Activated CD4-positive, alpha-beta memory T cell treated with anti-CD3 and anti-CD28 coated beads for 36 hours (primary cell): ENCODE measurements at regions of chr17 and their contacts with region 1.

Region 1: DNA sequence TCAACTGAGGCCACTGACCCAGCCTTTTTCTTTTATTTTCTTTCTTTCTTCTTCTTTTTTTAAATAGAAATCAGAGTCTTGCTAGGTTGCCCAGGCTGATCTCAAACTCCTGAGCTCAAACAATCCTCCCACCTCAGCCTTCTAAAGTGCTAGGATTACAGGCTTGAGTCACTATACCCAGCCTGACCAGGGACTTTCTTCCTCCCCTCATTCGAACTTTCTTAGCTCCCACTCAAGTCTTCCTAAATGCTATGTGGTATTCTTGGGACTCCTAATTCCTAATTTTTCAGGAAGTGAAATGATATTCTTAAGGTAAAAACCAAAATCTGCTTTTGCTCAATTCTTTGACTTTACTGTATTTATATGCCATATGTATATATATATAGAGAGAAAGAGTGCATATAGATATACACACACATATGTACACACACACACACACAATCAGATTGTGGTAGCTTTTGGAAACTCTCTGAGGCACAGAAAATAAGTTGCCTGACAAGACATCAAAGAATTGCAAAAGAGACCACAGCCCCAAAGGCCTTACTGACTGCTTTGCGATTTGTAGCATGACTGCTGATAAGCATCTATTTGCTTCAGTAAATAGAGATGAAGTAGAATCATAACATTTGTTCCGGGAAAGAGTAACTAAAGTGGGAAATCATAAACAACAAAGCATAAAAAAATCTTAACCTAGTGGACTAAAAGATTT is 9.5 kb upstream of the AMZ2 start:
- DNase-seq: peak; percentile 38
- H3K4me3 Mint-ChIP-seq: peak overlapping the region; percentile 73
- H3K27ac Mint-ChIP-seq: peak overlapping the region; percentile 96
- H3K4me1 Mint-ChIP-seq: peaks cover 53% of the 10 kb centered on the region
- H3K27me3 Mint-ChIP-seq: no peaks in the 10 kb centered on the region

Region 2: DNA sequence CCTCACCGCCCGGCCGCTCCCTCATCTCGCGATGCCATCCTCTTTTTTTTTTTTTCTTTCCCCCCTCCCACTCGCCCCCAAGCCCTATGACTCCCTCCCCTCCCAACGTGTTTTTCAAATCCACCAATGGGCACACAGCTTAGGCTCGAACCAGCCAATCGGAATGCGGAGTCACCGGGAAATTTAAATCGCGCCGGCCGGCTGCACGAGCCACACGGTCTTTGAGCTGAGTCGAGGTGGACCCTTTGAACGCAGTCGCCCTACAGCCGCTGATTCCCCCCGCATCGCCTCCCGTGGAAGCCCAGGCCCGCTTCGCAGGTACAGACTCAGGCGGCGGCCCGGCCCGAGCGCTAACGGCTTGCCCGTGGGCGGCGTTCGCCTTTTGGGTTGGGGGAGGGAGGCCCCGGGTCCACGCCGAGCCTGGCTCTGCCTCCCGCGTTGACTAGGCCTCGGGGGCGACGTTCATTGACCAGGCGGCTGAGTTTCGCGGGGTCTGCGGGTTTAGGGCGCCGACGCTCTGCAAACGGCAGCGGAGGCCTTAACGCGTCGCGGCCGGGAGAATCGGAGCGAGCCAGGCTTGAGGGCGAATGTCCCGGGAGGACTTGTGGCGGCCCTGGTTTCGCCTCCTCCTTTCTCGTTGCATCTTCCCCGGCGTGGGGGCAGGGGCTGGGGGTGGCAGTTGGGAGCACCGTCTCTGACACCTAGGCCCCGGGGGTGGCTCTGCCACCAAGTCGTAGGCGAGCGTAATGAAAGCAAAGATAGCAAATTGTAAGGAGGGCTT is 202.6 kb before region 1 on chr17 and contains the start of gene KPNA2:
- CTCF ChIA-PET with region 1: no interaction called
- POLR2A ChIA-PET with region 1: no interaction called
- intact Hi-C with region 1: loop called (anchors 5 kb)
- DNase-seq: peak; percentile 95
- H3K4me3 Mint-ChIP-seq: peak within 1 kb of the TSS; percentile 95
- H3K27ac Mint-ChIP-seq: peak within 1 kb of the TSS; percentile 95
- H3K4me1 Mint-ChIP-seq: peaks cover 21% of the 10 kb centered on the region
- H3K27me3 Mint-ChIP-seq: no peaks in the 10 kb centered on the region
- total RNA-seq, gene KPNA2: 225 to 229 TPM

Region 3: DNA sequence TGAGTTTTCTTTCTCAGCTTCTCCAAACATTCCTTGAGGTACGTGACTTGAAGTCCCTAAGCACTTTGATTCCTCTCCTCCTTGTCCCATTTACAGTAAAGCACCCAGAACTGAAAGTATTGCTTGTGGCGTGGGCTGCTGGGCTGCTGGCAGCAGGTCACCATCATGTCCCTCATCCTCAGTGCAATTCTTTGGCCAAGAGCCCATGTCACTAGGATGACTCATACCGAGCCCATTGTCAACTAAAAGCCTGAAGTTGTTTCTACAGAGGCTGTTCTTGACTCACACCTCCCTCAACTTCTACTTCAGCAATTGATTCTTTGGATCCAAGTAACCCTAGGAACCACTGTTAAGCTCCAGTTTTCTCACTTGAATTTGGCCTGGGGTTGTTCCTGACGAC is 148.4 kb before region 1 on chr17:
- CTCF ChIA-PET with region 1: no interaction called
- POLR2A ChIA-PET with region 1: no interaction called
- intact Hi-C with region 1: no loop called
- DNase-seq: peak; percentile 58
- H3K4me3 Mint-ChIP-seq: no peak overlapping the region
- H3K27ac Mint-ChIP-seq: no peak overlapping the region
- H3K4me1 Mint-ChIP-seq: peaks cover 30% of the 10 kb centered on the region
- H3K27me3 Mint-ChIP-seq: no peaks in the 10 kb centered on the region

Region 4: GRCh38 chr17:68205251-68205807 is 33.0 kb before region 1 on chr17:
- CTCF ChIA-PET with region 1: interaction called, 6 read pairs
- POLR2A ChIA-PET with region 1: interaction called, 3 read pairs
- intact Hi-C with region 1: loop called (anchors 1 kb)
- DNase-seq: peak; percentile 93
- H3K4me3 Mint-ChIP-seq: peak overlapping the region; percentile 81
- H3K27ac Mint-ChIP-seq: peak overlapping the region; percentile 89
- H3K4me1 Mint-ChIP-seq: peaks cover 32% of the 10 kb centered on the region
- H3K27me3 Mint-ChIP-seq: no peaks in the 10 kb centered on the region

Region 5: GRCh38 chr17:68255731-68256538 is 17.6 kb after region 1 on chr17:
- CTCF ChIA-PET with region 1: no interaction called
- POLR2A ChIA-PET with region 1: interaction called, 5 read pairs
- intact Hi-C with region 1: loop called (anchors 1 kb)
- DNase-seq: peak; percentile 50
- H3K4me3 Mint-ChIP-seq: peak overlapping the region; percentile 5
- H3K27ac Mint-ChIP-seq: peak overlapping the region; percentile 84
- H3K4me1 Mint-ChIP-seq: peaks cover 84% of the 10 kb centered on the region
- H3K27me3 Mint-ChIP-seq: no peaks in the 10 kb centered on the region

Region 6: GRCh38 chr17:68835071-68835470 is 596.8 kb after region 1 on chr17:
- CTCF ChIA-PET with region 1: no interaction called
- POLR2A ChIA-PET with region 1: no interaction called
- intact Hi-C with region 1: no loop called
- DNase-seq: no peak
- H3K4me3 Mint-ChIP-seq: no peak overlapping the region
- H3K27ac Mint-ChIP-seq: no peak overlapping the region
- H3K4me1 Mint-ChIP-seq: no peaks in the 10 kb centered on the region
- H3K27me3 Mint-ChIP-seq: peaks cover 12% of the 10 kb centered on the region